Activated CD4-positive, alpha-beta memory T cell treated with anti-CD3 and anti-CD28 coated beads for 36 hours (primary cell): ENCODE measurements at regions of chr11 and their contacts with region 1.

Region 1: DNA sequence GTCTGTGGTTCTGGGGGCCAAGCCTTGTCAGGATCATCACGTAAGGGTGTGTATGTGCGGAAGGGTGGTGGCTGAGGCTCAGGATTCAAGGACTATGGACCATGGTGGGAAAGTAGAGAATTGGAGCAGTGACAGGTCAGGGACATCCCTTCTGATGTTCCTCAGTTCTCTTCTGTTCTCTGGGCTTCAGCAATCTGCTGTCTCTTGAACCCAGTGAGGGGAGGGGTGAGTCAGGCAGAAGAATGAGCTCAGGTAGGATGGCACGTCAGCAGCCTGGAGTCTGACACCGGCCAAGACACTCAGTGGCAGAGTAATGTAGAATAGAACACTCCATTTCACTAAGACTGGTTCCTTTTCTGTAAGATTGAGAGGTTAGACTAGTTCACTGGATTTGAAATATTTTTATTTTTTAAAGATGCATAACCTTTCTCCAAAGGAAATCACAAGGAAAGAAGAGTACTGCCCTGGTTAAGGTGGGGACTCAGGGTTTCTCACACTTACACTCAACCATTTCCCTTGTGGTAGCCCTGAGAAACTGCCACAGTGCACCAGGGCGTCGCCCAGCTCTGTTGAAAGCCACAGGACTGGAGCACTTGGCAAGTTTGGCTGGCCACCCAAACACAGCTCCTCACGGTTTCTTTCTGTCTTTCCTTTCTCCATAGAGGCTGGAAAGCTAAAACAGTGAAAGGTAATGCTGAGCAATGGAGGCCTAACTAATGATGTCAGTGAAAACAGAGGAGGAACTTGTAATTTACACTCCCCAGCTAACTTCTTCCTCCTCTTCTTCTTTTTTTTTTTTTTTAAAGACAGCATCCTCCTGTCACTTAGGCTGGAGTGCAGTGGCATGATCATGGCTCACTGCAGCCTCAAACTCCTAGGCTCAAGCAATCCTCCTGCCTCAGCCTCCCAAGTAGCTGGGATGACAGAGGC is 23.1 kb upstream of the MICAL2 start:
- DNase-seq: peak; percentile 64
- H3K4me3 Mint-ChIP-seq: peak overlapping the region; percentile 13
- H3K27ac Mint-ChIP-seq: peak overlapping the region; percentile 68
- H3K4me1 Mint-ChIP-seq: peaks cover 60% of the 10 kb centered on the region
- H3K27me3 Mint-ChIP-seq: no peaks in the 10 kb centered on the region

Region 2: GRCh38 chr11:12110201-12110713 is 22.9 kb after region 1 on chr11 and contains the start of gene MICAL2:
- CTCF ChIA-PET with region 1: interaction called, 4 read pairs
- POLR2A ChIA-PET with region 1: interaction called, 7 read pairs
- intact Hi-C with region 1: loop called (anchors 2 kb)
- DNase-seq: peak; percentile 91
- H3K4me3 Mint-ChIP-seq: peak within 1 kb of the TSS; percentile 82
- H3K27ac Mint-ChIP-seq: peak within 1 kb of the TSS; percentile 91
- H3K4me1 Mint-ChIP-seq: peaks cover 40% of the 10 kb centered on the region
- H3K27me3 Mint-ChIP-seq: no peaks in the 10 kb centered on the region
- total RNA-seq, gene MICAL2: 213 to 220 TPM

Region 3: DNA sequence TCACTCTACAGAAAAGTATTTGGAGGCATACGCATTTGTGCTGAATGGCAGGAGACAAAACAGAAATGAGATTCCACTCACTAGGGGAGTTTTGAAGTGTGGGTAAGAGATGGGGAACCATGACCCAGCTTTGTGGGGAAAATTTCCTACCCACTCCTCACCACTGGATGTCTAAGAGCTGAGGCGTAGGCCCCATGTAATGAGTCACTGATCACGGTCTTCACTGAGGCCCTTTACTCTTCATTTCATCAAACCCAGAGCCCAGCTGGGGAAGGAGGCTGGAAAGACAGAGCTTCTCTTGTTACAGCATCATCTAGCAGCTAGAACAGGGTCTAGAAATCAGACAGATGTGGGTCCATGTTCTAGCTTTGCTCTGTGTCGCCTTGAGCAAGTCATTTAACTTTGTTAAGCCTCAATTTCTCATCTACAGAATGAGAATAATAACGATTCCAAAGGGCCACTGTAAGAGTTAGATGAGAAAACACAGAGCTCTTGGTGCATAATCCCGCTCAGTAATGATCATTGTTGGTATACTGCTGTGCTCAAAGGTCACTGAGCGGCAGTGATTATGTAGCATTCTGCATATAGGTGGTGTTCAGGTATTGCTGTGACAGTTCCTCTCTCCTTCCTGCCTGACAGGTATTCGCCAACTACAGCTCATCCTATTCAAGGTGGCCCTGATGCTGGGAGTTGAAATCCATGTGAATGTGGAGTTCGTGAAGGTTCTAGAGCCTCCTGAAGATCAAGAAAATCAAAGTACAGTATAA is 120.2 kb after region 1 on chr11:
- CTCF ChIA-PET with region 1: interaction called, 11 read pairs
- POLR2A ChIA-PET with region 1: interaction called, 4 read pairs
- intact Hi-C with region 1: no loop called
- DNase-seq: peak; percentile 84
- H3K4me3 Mint-ChIP-seq: peak overlapping the region; percentile 14
- H3K27ac Mint-ChIP-seq: peak overlapping the region; percentile 87
- H3K4me1 Mint-ChIP-seq: peaks cover 69% of the 10 kb centered on the region
- H3K27me3 Mint-ChIP-seq: no peaks in the 10 kb centered on the region